ENCODE measurements at regions of chrX and their contacts with region 1.

Region 1: DNA sequence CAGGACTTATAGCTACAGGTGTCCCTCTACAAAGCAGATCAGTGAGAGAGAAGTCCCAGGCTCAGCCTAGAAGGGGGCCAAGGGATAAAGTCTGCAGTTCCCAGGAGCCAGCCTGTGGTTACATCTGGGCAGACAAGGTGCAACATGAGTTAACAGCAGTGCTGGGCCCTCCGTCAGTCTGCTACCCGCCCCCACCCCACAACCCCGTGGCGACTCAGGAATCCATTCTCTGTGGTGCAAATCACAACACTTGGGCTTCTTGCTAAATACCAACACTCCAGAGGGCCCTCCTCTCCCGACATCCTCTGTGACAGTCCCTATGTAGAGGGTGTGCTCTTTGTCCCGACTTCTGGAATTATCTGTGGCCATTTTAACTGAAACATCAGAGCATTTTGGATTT is 13.8 kb downstream of the GPM6B start:
- DNase-seq: no peak
- ATAC-seq: no peak
- H3K4me3 Mint-ChIP-seq: no peak overlapping the region
- H3K27ac Mint-ChIP-seq: no peak overlapping the region
- H3K4me1 Mint-ChIP-seq: no peaks in the 10 kb centered on the region
- H3K27me3 Mint-ChIP-seq: no peaks in the 10 kb centered on the region

Region 2: GRCh38 chrX:14712102-14712501 is 909.0 kb after region 1 on chrX:
- CTCF ChIA-PET with region 1: no interaction called
- POLR2A ChIA-PET with region 1: no interaction called
- intact Hi-C with region 1: loop called in 1 of 2 experiments (anchors 5 kb)
- DNase-seq: no peak
- ATAC-seq: no peak
- H3K4me3 Mint-ChIP-seq: no peak overlapping the region
- H3K27ac Mint-ChIP-seq: no peak overlapping the region
- H3K4me1 Mint-ChIP-seq: no peaks in the 10 kb centered on the region
- H3K27me3 Mint-ChIP-seq: no peaks in the 10 kb centered on the region